ENCODE measurements at regions of chrX and their contacts with region 1.

Region 1: GRCh38 chrX:150704030-150704613 is 10.9 kb downstream of the MTMR1 start:
- DNase-seq: no peak
- H3K4me3 Mint-ChIP-seq: no peak overlapping the region
- H3K27ac Mint-ChIP-seq: peak overlapping the region; percentile 56
- H3K4me1 Mint-ChIP-seq: peaks cover 28% of the 10 kb centered on the region
- H3K27me3 Mint-ChIP-seq: no peaks in the 10 kb centered on the region

Region 2: DNA sequence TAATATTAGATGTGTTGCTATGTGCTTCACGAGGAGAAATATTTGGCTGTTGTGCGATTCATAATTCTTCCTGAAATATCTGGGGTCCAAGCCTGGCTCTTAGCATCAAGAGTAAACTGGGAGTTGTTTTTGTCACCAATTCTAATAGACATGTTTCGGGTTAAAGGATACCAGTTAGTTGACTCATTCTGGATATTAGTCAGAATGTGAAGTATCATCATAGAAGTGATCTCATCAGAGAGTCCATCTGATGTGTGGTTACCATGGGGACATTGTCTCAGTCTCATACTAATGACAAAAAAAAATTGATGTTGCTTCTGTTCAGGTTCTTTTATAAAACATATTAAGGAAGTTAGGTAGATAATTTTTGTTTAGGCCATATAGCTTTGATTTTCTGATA is 68.2 kb before region 1 on chrX:
- intact Hi-C with region 1: loop called (anchors 10 kb)
- DNase-seq: no peak
- H3K4me3 Mint-ChIP-seq: no peak overlapping the region
- H3K27ac Mint-ChIP-seq: peak overlapping the region; percentile 74
- H3K4me1 Mint-ChIP-seq: peaks cover 8% of the 10 kb centered on the region
- H3K27me3 Mint-ChIP-seq: no peaks in the 10 kb centered on the region